Activated naive CD8-positive, alpha-beta T cell treated with anti-CD3 and anti-CD28 coated beads, Interleukin-2, amount 10 ng/mL, durations not matched to agents 7 days and 5 days (primary cell): ENCODE measurements at regions of chr2 and their contacts with region 1.

Region 1: GRCh38 chr2:46002507-46002883 is 294.7 kb upstream of the EPAS1 start:
- DNase-seq: no peak
- ATAC-seq: no peak
- H3K4me3 Mint-ChIP-seq: no peak overlapping the region
- H3K27ac Mint-ChIP-seq: no peak overlapping the region
- H3K4me1 Mint-ChIP-seq: peaks cover 2% of the 10 kb centered on the region
- H3K27me3 Mint-ChIP-seq: peaks cover 2% of the 10 kb centered on the region

Region 2: DNA sequence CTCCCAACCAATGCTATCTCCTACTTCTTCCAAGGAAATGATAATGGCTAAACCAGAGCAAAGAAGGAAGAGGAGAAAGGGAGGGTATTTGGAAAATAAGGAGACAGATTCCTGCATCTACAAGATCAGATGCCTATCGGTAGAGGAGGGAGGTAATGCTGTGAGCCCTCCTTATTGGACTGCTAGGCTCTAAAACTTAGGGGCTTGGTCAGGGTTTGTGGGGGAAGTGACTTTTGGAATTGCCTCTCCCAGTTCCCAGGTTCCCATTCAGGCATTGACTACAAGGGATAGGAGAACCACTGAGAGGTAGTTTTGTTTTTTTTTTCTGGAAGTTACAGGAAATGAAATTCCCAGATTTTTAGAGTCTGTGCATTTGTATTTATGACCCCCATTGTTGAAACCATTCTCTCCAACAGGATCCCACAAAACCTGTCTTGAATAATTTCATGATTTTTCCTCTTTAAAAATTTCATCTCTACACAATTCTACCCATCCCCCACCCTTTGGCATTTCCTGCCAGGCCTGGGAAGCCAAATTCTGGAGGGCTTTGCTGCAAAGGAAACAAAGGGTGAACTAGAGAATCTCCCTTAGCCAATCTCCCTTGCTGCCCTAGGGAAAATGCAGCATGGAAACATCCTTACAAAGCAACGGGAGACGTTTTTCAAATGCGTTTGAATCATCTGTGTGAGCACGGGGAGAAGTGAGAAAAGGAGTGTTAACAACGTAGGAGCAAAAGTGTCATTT is 12.6 kb after region 1 on chr2:
- POLR2A ChIA-PET with region 1: no interaction called
- DNase-seq: no peak
- ATAC-seq: no peak
- H3K4me3 Mint-ChIP-seq: no peak overlapping the region
- H3K27ac Mint-ChIP-seq: no peak overlapping the region
- H3K4me1 Mint-ChIP-seq: peaks cover 19% of the 10 kb centered on the region
- H3K27me3 Mint-ChIP-seq: no peaks in the 10 kb centered on the region

Region 3: GRCh38 chr2:46101557-46102225 is 99.2 kb after region 1 on chr2:
- POLR2A ChIA-PET with region 1: interaction called, 10 read pairs
- DNase-seq: no peak
- ATAC-seq: no peak
- H3K4me3 Mint-ChIP-seq: no peak overlapping the region
- H3K27ac Mint-ChIP-seq: peak overlapping the region; percentile 32
- H3K4me1 Mint-ChIP-seq: peaks cover 17% of the 10 kb centered on the region
- H3K27me3 Mint-ChIP-seq: peaks cover 4% of the 10 kb centered on the region